ENCODE measurements at regions of chr16 and their contacts with region 1.

Region 1: GRCh38 chr16:29926005-29926710 is at the start of gene KCTD13:
- DNase-seq: peak; percentile 84
- ATAC-seq: peak; percentile 93
- H3K4me3 ChIP-seq: peak within 1 kb of the TSS; percentile 92
- H3K27ac ChIP-seq: peak within 1 kb of the TSS; percentile 62
- H3K4me1 ChIP-seq: peaks cover 15% of the 10 kb centered on the region; the same call in 1 of the 2 replicates
- H3K27me3 ChIP-seq: no peaks in the 10 kb centered on the region
- CTCF ChIP-seq: no peak
- total RNA-seq, gene KCTD13: 8.2 and 30.2 TPM in 2 replicates

Region 2: GRCh38 chr16:29862884-29863668 is 63.1 kb before region 1 on chr16 and contains the start of gene CDIPT:
- CTCF ChIA-PET with region 1: no interaction called
- POLR2A ChIA-PET with region 1: no interaction called
- intact Hi-C with region 1: no loop called
- DNase-seq: peak; percentile 93
- ATAC-seq: peak; percentile 98
- H3K4me3 ChIP-seq: peak within 1 kb of the TSS; percentile 78
- H3K27ac ChIP-seq: peak within 1 kb of the TSS; percentile 65
- H3K4me1 ChIP-seq: no peaks in the 10 kb centered on the region
- H3K27me3 ChIP-seq: no peaks in the 10 kb centered on the region
- CTCF ChIP-seq: peak; percentile 74
- total RNA-seq, gene CDIPT: 60.5 and 86.2 TPM in 2 replicates

Region 3: DNA sequence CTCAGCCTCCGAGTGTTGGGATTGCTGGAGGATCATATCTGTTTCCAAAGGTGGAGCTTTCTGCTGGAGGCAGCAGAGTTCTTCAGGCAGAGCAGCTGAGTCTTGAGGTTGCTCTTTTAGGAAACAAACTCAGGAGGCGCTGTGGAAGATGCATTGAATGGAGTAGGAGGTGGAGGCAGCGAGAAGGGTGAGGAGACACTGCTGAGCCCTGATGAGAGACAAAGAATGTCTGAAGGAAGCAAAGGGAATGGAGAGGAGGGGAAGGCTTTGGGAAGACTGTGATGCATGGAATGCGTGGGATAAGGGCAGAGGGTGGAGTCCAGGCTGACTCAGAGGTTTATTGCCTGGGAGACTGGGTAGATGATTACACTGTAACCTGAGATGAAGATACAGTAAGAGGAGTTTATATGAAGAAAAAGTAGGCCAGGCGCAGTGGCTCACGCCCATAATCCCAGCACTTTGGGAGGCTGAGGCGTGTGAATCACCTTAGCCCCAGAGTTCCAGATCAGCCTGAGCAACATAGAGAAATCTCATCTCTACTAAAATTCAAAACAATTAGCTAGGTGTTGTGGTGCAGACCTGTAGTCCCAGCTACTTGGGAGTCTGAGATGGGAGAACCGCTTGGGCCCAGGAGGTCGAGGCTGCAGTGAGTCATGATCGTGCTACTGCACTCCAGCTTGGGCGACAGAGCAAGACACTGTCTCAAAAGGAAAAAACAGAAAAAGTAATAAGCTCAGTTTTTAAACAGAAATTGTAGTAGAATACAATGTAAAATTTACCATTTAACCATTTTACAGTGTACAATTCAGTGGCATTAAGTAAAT is 17.9 kb after region 1 on chr16:
- CTCF ChIA-PET with region 1: no interaction called
- POLR2A ChIA-PET with region 1: no interaction called
- intact Hi-C with region 1: loop called (anchors 2 kb)
- DNase-seq: peak; percentile 95
- ATAC-seq: peak; percentile 99
- H3K4me3 ChIP-seq: peak overlapping the region; percentile 50
- H3K27ac ChIP-seq: peak overlapping the region; percentile 98
- H3K4me1 ChIP-seq: peaks cover 20% of the 10 kb centered on the region
- H3K27me3 ChIP-seq: no peaks in the 10 kb centered on the region
- CTCF ChIP-seq: peak; percentile 45

Region 4: GRCh38 chr16:29973384-29974246 is 47.5 kb after region 1 on chr16 and contains the start of gene TAOK2:
- CTCF ChIA-PET with region 1: no interaction called
- POLR2A ChIA-PET with region 1: interaction called, 5 read pairs
- intact Hi-C with region 1: loop called (anchors 5 kb)
- DNase-seq: peak; percentile 95
- ATAC-seq: peak; percentile 99
- H3K4me3 ChIP-seq: peak within 1 kb of the TSS; percentile 98
- H3K27ac ChIP-seq: peak within 1 kb of the TSS; percentile 37; the same call in 1 of the 2 replicates
- H3K4me1 ChIP-seq: peaks cover 22% of the 10 kb centered on the region
- H3K27me3 ChIP-seq: no peaks in the 10 kb centered on the region
- CTCF ChIP-seq: no peak
- total RNA-seq, gene TAOK2: 34.1 and 47.4 TPM in 2 replicates